ENCODE measurements at regions of chr18 and their contacts with region 1.

Region 1: DNA sequence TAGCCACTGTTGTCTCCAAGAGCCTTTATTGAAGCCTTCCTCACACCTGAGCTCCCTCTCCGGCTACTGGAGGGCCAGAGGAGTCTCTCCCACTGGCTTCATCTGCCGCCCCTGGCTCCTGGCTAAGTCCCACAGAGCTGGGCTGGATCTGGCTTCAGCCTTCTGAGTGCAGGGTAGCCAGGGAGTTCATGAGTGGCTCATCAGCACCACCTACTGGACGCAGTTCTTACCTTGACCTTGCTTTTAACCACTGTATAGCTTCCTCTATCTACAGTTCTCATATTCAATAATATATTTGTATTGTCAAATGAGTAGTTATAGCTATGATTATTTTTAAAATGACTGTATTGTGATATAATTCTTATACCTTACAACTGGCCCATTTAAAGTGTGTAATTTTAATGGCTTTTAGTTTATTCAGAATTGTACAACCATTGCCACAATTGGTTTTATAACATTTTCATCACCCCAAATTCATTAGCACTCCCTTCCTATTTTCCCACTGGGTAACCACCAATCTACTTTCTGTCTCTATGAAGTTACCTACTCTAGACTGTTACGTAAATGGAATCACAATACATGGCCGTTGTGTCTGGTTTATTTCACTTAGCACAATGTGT is 17.7 kb downstream of the CNDP1 start:
- DNase-seq: no peak
- H3K4me3 ChIP-seq: no peak overlapping the region
- H3K27me3 ChIP-seq: peaks cover 18% of the 10 kb centered on the region
- CTCF ChIP-seq: peak; percentile 85

Region 2: GRCh38 chr18:74563999-74564398 is 12.0 kb after region 1 on chr18:
- CTCF ChIA-PET with region 1: interaction called, 13 read pairs
- POLR2A ChIA-PET with region 1: no interaction called
- DNase-seq: no peak
- H3K4me3 ChIP-seq: no peak overlapping the region
- H3K27me3 ChIP-seq: peaks cover 6% of the 10 kb centered on the region
- CTCF ChIP-seq: no peak

Region 3: DNA sequence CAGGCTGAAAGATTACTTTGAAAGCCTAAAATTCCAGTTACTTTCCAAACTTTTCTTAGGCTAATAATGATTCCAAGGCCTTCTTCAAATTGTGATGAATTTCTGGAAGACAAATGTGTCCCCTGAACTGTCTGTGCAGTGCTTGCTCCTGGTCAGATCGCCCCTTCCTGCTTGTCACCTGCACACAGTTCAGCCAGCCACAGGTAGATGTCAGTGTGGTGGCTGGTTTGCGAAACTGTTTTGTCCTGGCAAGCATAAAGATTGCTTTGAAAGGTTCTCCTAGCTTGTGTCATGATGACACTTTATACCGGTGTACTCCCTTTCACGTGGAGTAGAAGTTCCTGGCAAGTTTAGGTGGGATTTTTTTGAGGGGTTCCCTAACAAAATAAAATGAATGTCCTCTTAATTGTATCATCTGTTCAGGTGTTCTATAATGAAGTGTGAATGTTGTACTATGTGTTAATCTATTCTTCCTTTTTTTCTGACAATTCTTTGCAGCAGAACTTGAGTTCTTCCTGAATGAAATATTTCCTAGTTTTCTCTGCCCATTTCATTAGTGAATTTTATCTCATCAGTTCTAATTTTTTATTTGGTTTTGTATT is 344.4 kb after region 1 on chr18:
- CTCF ChIA-PET with region 1: no interaction called
- POLR2A ChIA-PET with region 1: no interaction called
- DNase-seq: no peak
- H3K4me3 ChIP-seq: no peak overlapping the region
- H3K27me3 ChIP-seq: no peaks in the 10 kb centered on the region
- CTCF ChIP-seq: peak; percentile 26

Measured in BJ (cell line).